Activated CD8-positive, alpha-beta T cell treated with anti-CD3 and anti-CD28 coated beads for 36 hours (primary cell): ENCODE measurements at regions of chr10 and their contacts with region 1.

Region 1: DNA sequence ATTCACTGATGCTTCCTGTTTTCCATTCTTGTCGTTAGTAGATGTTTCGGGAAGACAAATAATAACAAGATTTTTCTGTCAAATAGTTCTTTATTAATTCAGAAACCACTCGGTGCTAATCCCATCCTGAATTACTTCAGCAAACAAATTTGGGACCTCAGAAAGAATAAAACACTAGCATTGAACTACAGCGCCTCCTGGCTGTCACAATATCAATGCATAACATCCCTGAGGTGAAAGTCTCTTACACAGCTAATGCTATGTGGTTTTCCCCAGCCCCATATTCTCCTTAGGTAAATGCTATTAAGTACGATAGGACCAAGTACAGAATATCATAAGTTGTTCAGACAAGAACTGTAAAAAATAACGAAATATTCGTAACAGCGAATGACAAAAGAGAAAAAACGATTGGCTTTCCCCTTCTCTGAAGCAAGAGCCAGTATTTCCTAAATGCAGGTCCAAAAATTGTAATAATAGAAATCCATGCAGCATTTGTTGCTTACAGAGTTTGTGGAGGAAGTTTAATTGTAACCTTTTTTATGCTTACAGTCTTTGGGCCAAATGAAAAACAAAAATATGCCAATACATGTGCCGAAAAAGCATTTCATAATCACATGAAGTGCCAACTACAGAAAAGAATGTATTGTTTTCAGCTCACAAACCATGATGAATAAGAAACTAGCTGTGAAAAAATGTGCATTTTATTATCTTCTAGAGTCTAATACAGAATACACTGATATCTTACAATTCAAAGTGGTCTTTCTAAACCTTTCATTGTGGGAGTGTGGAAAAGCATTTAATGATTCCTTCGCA is 47.3 kb downstream of the MYPN start:
- DNase-seq: peak; percentile 80
- ATAC-seq: no peak
- H3K4me3 Mint-ChIP-seq: no peak overlapping the region
- H3K27ac Mint-ChIP-seq: no peak overlapping the region
- H3K4me1 Mint-ChIP-seq: no peaks in the 10 kb centered on the region
- H3K27me3 Mint-ChIP-seq: no peaks in the 10 kb centered on the region
- CTCF ChIP-seq: peak; percentile 95

Region 2: GRCh38 chr10:68086011-68086410 is 70.6 kb before region 1 on chr10:
- CTCF ChIA-PET with region 1: interaction called, 10 read pairs
- POLR2A ChIA-PET with region 1: no interaction called
- intact Hi-C with region 1: no loop called
- DNase-seq: no peak
- ATAC-seq: no peak
- H3K4me3 Mint-ChIP-seq: no peak overlapping the region
- H3K27ac Mint-ChIP-seq: no peak overlapping the region
- H3K4me1 Mint-ChIP-seq: peaks cover 7% of the 10 kb centered on the region
- H3K27me3 Mint-ChIP-seq: peaks cover 9% of the 10 kb centered on the region
- CTCF ChIP-seq: no peak